ENCODE measurements at regions of chr3 and their contacts with region 1.

Region 1: DNA sequence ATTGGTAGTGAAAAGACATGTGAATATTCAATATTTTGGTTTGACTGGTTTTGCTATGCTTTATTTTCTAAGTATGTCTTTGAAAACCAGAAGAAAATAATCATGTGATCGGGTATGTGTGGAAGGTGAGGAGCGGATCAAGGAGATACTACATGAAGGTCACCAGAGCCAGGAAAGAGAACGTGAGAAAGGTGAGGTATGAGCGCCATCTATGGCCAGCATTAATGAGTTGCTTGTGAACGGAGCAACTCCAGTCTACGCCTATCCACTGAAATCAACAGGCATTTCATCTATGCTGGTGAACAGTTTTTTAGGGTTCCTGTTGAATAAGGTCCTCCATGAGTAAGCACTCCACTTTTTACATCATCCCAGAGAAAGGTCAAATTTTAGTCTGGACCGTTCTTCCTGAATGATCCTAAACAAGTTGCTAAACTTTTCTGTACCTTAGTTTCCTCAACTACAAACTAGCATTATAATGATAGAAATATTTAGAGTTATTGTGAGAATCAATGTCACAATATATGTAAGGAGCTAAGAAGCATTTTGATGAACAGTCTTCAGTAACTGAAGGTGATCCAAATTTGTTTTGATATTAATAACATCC is 1435.2 kb upstream of the CADM2 start:
- DNase-seq: peak; percentile 58 to 62
- H3K4me3 ChIP-seq: no peak overlapping the region
- H3K4me3 Mint-ChIP-seq: no peak overlapping the region
- H3K27ac Mint-ChIP-seq: no peak overlapping the region
- H3K4me1 ChIP-seq: no peaks in the 10 kb centered on the region
- H3K4me1 Mint-ChIP-seq: no peaks in the 10 kb centered on the region
- H3K27me3 ChIP-seq: no peaks in the 10 kb centered on the region
- H3K27me3 Mint-ChIP-seq: no peaks in the 10 kb centered on the region
- CTCF ChIP-seq: peak; percentile 55 to 66

Region 2: DNA sequence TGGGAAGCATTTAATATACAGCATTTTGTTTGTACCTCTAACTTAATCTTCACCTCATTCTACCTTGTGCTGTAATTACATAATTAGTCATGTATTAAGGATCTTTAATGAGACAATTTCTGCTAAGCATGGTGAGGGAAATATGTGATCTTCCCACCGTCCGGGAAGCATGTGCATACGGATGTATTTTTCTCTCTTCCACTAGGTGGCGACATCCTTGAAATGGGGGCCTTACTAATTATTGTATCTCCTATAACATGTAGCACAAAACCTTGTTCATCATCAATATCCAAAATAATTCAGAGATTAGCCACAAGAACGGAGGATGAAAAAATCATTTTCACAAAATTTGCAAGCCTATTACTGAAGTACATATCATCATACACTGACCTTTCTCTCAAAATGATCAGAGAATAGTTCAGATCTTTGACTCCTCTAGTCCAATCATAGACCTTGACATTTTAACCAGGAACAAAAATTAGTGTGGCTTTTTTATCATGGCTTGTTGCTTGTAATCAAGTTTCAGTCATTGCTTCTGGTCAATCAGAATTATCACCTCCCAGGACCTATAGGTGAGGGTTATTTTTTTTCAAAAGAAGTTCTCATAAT is 1613.2 kb before region 1 on chr3:
- CTCF ChIA-PET with region 1: no interaction called
- POLR2A ChIA-PET with region 1: no interaction called
- intact Hi-C with region 1: loop called (anchors 1 kb)
- DNase-seq: peak in 1 of 2 experiments; percentile 41
- H3K4me3 ChIP-seq: no peak overlapping the region
- H3K4me3 Mint-ChIP-seq: no peak overlapping the region
- H3K27ac Mint-ChIP-seq: no peak overlapping the region
- H3K4me1 ChIP-seq: no peaks in the 10 kb centered on the region
- H3K4me1 Mint-ChIP-seq: no peaks in the 10 kb centered on the region
- H3K27me3 ChIP-seq: no peaks in the 10 kb centered on the region
- H3K27me3 Mint-ChIP-seq: no peaks in the 10 kb centered on the region
- CTCF ChIP-seq: peak; percentile 59 to 75

Region 3: GRCh38 chr3:82643948-82644347 is 879.6 kb before region 1 on chr3:
- CTCF ChIA-PET with region 1: no interaction called
- POLR2A ChIA-PET with region 1: no interaction called
- intact Hi-C with region 1: loop called (anchors 5 kb)
- DNase-seq: peak in 1 of 2 experiments; percentile 8
- H3K4me3 ChIP-seq: no peak overlapping the region
- H3K4me3 Mint-ChIP-seq: no peak overlapping the region
- H3K27ac Mint-ChIP-seq: no peak overlapping the region
- H3K4me1 ChIP-seq: no peaks in the 10 kb centered on the region
- H3K4me1 Mint-ChIP-seq: no peaks in the 10 kb centered on the region
- H3K27me3 ChIP-seq: no peaks in the 10 kb centered on the region
- H3K27me3 Mint-ChIP-seq: no peaks in the 10 kb centered on the region
- CTCF ChIP-seq: peak in 1 of 2 experiments; percentile 29

Region 4: DNA sequence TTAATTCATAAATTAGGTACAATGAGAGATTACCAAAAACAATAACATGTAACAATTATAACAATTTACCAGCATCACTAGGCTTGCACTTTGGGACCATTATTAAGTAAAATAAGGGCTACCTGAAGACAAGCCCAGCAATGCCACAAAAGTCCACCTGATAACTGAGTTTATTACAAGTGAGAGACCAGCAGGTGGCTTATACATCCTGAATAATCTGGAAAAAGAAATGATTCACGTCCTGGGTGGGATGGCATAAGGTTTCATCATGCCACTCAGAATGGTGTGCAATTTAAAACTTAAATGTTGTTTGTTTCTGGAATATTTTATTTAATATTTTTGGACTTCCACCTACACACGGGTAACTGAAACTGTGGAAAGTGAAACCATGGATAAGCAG is 475.0 kb before region 1 on chr3:
- CTCF ChIA-PET with region 1: no interaction called
- POLR2A ChIA-PET with region 1: no interaction called
- intact Hi-C with region 1: loop called (anchors 1 kb)
- DNase-seq: no peak
- H3K4me3 ChIP-seq: no peak overlapping the region
- H3K4me3 Mint-ChIP-seq: no peak overlapping the region
- H3K27ac Mint-ChIP-seq: no peak overlapping the region
- H3K4me1 ChIP-seq: no peaks in the 10 kb centered on the region
- H3K4me1 Mint-ChIP-seq: no peaks in the 10 kb centered on the region
- H3K27me3 ChIP-seq: no peaks in the 10 kb centered on the region
- H3K27me3 Mint-ChIP-seq: no peaks in the 10 kb centered on the region
- CTCF ChIP-seq: no peak

Region 5: GRCh38 chr3:83233715-83234114 is 289.9 kb before region 1 on chr3:
- CTCF ChIA-PET with region 1: no interaction called
- POLR2A ChIA-PET with region 1: no interaction called
- intact Hi-C with region 1: loop called (anchors 10 kb)
- DNase-seq: no peak
- H3K4me3 ChIP-seq: no peak overlapping the region
- H3K4me3 Mint-ChIP-seq: no peak overlapping the region
- H3K27ac Mint-ChIP-seq: no peak overlapping the region
- H3K4me1 ChIP-seq: no peaks in the 10 kb centered on the region
- H3K4me1 Mint-ChIP-seq: no peaks in the 10 kb centered on the region
- H3K27me3 ChIP-seq: no peaks in the 10 kb centered on the region
- H3K27me3 Mint-ChIP-seq: no peaks in the 10 kb centered on the region
- CTCF ChIP-seq: no peak

Measured in Caco-2 (cell line).